HepG2 (cell line): ENCODE measurements at regions of chr9 and their contacts with region 1.

Region 1: DNA sequence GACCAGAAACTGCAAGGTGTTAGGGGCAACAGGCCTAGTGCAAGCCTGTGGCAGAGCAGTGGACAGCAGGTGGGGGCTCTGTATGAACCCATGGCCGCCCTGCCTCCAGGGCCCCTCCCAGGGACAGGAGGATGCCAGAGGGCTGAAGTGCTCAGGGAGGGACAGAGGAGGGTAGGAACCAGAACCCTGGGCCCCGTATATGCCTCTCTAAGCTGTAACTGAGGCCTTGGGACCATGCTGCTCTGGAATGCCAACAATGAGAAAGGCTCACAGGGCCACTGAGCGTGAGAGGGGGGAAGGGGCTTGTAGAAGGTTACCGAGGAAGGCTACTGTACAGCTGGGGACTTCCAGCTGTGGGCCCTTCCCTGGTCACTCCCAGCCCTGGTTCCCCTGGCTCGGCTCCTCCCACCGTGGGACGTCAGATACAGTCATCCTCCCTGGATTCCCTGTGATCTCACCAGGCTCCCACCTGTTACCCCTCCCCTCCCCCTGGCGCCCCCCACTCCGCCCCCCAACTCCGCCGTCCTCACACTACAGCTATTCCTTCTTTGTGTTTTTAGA is 21.1 kb downstream of the AQP7 start:
- DNase-seq: peak; percentile 57
- ATAC-seq: peak; percentile 82
- H3K4me3 ChIP-seq: peak overlapping the region in 1 of 3 experiments; percentile 52; a peak in 1 of 6 replicates
- H3K27ac ChIP-seq: no peak overlapping the region
- H3K4me1 ChIP-seq: peaks cover 36% of the 10 kb centered on the region
- H3K27me3 ChIP-seq: no peaks in the 10 kb centered on the region
- CTCF ChIP-seq: no peak
- EP300 ChIP-seq: no peak
- POLR2A ChIP-seq: no peak
- RAD21 ChIP-seq: no peak

Region 2: GRCh38 chr9:33116860-33117259 is 264.5 kb before region 1 on chr9:
- CTCF ChIA-PET with region 1: no interaction called
- POLR2A ChIA-PET with region 1: no interaction called
- in situ Hi-C with region 1: no loop called
- intact Hi-C with region 1: no loop called
- DNase-seq: no peak
- ATAC-seq: no peak
- H3K4me3 ChIP-seq: no peak overlapping the region
- H3K27ac ChIP-seq: no peak overlapping the region
- H3K4me1 ChIP-seq: no peaks in the 10 kb centered on the region
- H3K27me3 ChIP-seq: no peaks in the 10 kb centered on the region
- CTCF ChIP-seq: no peak
- EP300 ChIP-seq: no peak
- POLR2A ChIP-seq: no peak
- RAD21 ChIP-seq: no peak

Region 3: DNA sequence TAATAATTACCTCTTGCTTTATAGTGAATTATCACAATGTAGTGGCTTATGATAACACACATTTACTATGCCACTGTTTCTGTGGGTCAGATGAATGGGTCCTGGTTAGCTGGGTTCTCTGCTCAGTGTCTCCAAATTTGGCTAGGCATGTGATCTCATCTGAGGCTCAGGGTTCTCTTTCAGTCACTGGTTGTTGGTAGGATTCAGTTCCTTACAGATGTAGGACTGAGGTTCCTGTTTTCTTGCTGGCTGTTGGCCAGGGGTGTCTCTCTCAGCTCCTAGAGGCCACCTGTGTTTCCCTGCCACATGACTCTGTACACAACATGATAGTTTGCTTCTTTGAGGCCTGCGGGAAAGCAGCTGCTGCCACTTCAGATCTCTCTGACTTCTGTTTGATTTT is 83.9 kb before region 1 on chr9:
- CTCF ChIA-PET with region 1: no interaction called
- POLR2A ChIA-PET with region 1: no interaction called
- in situ Hi-C with region 1: no loop called
- intact Hi-C with region 1: no loop called
- DNase-seq: no peak
- ATAC-seq: no peak; the same call in 2 of the 3 replicates
- H3K4me3 ChIP-seq: no peak overlapping the region
- H3K27ac ChIP-seq: peak overlapping the region; percentile 20
- H3K4me1 ChIP-seq: peaks cover 85% of the 10 kb centered on the region
- H3K27me3 ChIP-seq: no peaks in the 10 kb centered on the region
- CTCF ChIP-seq: no peak
- EP300 ChIP-seq: no peak
- POLR2A ChIP-seq: no peak
- RAD21 ChIP-seq: no peak

Region 4: GRCh38 chr9:33366979-33367480 is 14.3 kb before region 1 on chr9:
- CTCF ChIA-PET with region 1: no interaction called
- POLR2A ChIA-PET with region 1: no interaction called
- in situ Hi-C with region 1: no loop called
- intact Hi-C with region 1: no loop called
- DNase-seq: no peak
- ATAC-seq: no peak
- H3K4me3 ChIP-seq: no peak overlapping the region
- H3K27ac ChIP-seq: no peak overlapping the region
- H3K4me1 ChIP-seq: no peaks in the 10 kb centered on the region
- H3K27me3 ChIP-seq: no peaks in the 10 kb centered on the region
- CTCF ChIP-seq: no peak
- EP300 ChIP-seq: no peak
- POLR2A ChIP-seq: no peak
- RAD21 ChIP-seq: no peak

Region 5: GRCh38 chr9:33393581-33393980 is 12.3 kb after region 1 on chr9:
- CTCF ChIA-PET with region 1: no interaction called
- POLR2A ChIA-PET with region 1: interaction called, 3 read pairs
- in situ Hi-C with region 1: no loop called
- intact Hi-C with region 1: loop called (anchors 2 kb)
- DNase-seq: no peak
- ATAC-seq: no peak
- H3K4me3 ChIP-seq: peak overlapping the region in 2 of 3 experiments; percentile 12 to 65; a peak in 2 of 6 replicates
- H3K27ac ChIP-seq: no peak overlapping the region
- H3K4me1 ChIP-seq: peaks cover 54% of the 10 kb centered on the region
- H3K27me3 ChIP-seq: peaks cover 0 to 3% of the 10 kb centered on the region in 2 experiments; a peak in 1 of 5 replicates
- CTCF ChIP-seq: no peak
- EP300 ChIP-seq: no peak
- POLR2A ChIP-seq: no peak
- RAD21 ChIP-seq: no peak